PC-3 (cell line): ENCODE measurements at regions of chr4 and their contacts with region 1.

Region 1: GRCh38 chr4:147866532-147867271 is 134.8 kb downstream of the ARHGAP10 start:
- DNase-seq: peak; percentile 89
- ATAC-seq: peak; percentile 88
- H3K4me3 ChIP-seq: no peak overlapping the region
- H3K27ac ChIP-seq: no peak overlapping the region
- H3K4me1 ChIP-seq: no peaks in the 10 kb centered on the region
- H3K27me3 ChIP-seq: no peaks in the 10 kb centered on the region
- CTCF ChIP-seq: peak; percentile 99

Region 2: GRCh38 chr4:147019061-147019460 is 847.6 kb before region 1 on chr4:
- CTCF ChIA-PET with region 1: interaction called, 4 read pairs
- POLR2A ChIA-PET with region 1: no interaction called
- intact Hi-C with region 1: loop called (anchors 5 kb)
- DNase-seq: peak; percentile 72
- ATAC-seq: peak; percentile 85
- H3K4me3 ChIP-seq: no peak overlapping the region
- H3K27ac ChIP-seq: no peak overlapping the region
- H3K4me1 ChIP-seq: no peaks in the 10 kb centered on the region
- H3K27me3 ChIP-seq: peaks cover 12% of the 10 kb centered on the region
- CTCF ChIP-seq: peak; percentile 77

Region 3: DNA sequence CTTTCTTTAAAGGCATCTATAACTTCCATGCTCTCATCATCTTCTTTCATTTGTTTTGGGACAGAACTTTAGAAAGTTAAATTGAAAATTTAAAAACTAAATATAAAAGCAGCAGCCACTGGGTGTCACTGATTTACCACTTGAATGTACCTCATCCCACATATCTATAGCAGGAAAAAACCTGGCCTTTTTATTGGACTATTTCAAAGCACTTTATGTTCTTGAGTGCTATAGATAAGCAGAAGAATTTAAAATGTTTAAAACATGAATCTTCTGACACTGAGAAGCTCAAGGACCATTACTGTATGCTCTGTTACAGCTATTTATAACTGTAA is 755.7 kb before region 1 on chr4:
- CTCF ChIA-PET with region 1: no interaction called
- POLR2A ChIA-PET with region 1: no interaction called
- intact Hi-C with region 1: loop called (anchors 5 kb)
- DNase-seq: peak; percentile 43
- ATAC-seq: peak; percentile 38; the same call in 1 of the 2 replicates
- H3K4me3 ChIP-seq: no peak overlapping the region
- H3K27ac ChIP-seq: no peak overlapping the region
- H3K4me1 ChIP-seq: no peaks in the 10 kb centered on the region
- H3K27me3 ChIP-seq: no peaks in the 10 kb centered on the region
- CTCF ChIP-seq: peak; percentile 59

Region 4: DNA sequence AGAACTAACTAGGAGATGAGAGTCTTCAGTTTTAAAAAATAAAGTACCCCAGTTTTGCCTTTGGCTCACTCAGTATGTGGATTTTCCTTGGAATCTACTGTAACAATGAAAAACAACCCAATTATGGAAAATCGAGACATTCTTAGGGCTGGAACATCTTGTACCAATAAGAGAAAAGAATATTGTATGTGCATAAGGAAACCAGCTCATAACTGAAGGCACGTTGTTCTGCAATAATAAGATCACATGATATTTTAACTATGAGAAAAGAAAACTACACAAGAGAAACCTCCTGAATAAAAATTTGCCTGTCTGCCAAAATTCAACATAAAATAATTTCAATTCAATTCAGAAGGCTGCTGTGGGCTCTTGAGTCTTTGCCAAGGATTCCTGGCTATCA is 647.6 kb before region 1 on chr4:
- CTCF ChIA-PET with region 1: no interaction called
- POLR2A ChIA-PET with region 1: no interaction called
- intact Hi-C with region 1: no loop called
- DNase-seq: no peak
- ATAC-seq: no peak
- H3K4me3 ChIP-seq: no peak overlapping the region
- H3K27ac ChIP-seq: no peak overlapping the region
- H3K4me1 ChIP-seq: peaks cover 7% of the 10 kb centered on the region; the same call in 1 of the 2 replicates
- H3K27me3 ChIP-seq: no peaks in the 10 kb centered on the region
- CTCF ChIP-seq: no peak

Region 5: DNA sequence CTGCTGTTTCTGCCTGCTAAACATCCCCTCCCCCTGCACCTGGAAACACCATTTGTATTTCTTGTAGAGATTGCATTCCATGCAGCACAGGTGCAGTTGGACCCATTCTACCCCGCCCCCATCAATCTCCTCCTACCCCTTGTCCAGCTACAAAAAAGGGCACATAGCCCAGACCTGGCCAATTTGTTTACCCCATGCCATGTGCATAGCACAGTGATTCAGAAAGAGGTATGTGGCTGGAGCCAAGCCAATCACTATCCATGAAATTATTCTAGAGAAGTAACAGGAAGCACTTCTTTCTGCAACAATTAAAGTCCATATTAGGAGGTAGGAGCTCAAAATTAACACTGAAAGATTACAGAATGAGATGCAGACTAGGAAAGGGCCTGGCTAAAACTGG is 269.7 kb before region 1 on chr4:
- CTCF ChIA-PET with region 1: interaction called, 9 read pairs
- POLR2A ChIA-PET with region 1: no interaction called
- intact Hi-C with region 1: loop called (anchors 1 kb)
- DNase-seq: peak; percentile 90
- ATAC-seq: peak; percentile 88
- H3K4me3 ChIP-seq: no peak overlapping the region
- H3K27ac ChIP-seq: no peak overlapping the region
- H3K4me1 ChIP-seq: peaks cover 15% of the 10 kb centered on the region
- H3K27me3 ChIP-seq: no peaks in the 10 kb centered on the region
- CTCF ChIP-seq: no peak

Region 6: GRCh38 chr4:147693218-147693617 is 173.5 kb before region 1 on chr4:
- CTCF ChIA-PET with region 1: no interaction called
- POLR2A ChIA-PET with region 1: no interaction called
- intact Hi-C with region 1: loop called (anchors 5 kb)
- DNase-seq: no peak
- ATAC-seq: no peak
- H3K4me3 ChIP-seq: no peak overlapping the region
- H3K27ac ChIP-seq: no peak overlapping the region
- H3K4me1 ChIP-seq: no peaks in the 10 kb centered on the region
- H3K27me3 ChIP-seq: no peaks in the 10 kb centered on the region
- CTCF ChIP-seq: no peak

Region 7: GRCh38 chr4:147707865-147708672 is 158.6 kb before region 1 on chr4:
- CTCF ChIA-PET with region 1: interaction called, 6 read pairs
- POLR2A ChIA-PET with region 1: no interaction called
- intact Hi-C with region 1: loop called (anchors 1 kb)
- DNase-seq: peak; percentile 64
- ATAC-seq: peak; percentile 66
- H3K4me3 ChIP-seq: no peak overlapping the region
- H3K27ac ChIP-seq: no peak overlapping the region
- H3K4me1 ChIP-seq: no peaks in the 10 kb centered on the region
- H3K27me3 ChIP-seq: no peaks in the 10 kb centered on the region
- CTCF ChIP-seq: peak; percentile 87

Region 8: GRCh38 chr4:147772459-147772969 is 94.2 kb before region 1 on chr4:
- CTCF ChIA-PET with region 1: no interaction called
- POLR2A ChIA-PET with region 1: no interaction called
- intact Hi-C with region 1: loop called (anchors 5 kb)
- DNase-seq: peak; percentile 54
- ATAC-seq: peak; percentile 48
- H3K4me3 ChIP-seq: no peak overlapping the region
- H3K27ac ChIP-seq: peak overlapping the region; percentile 62
- H3K4me1 ChIP-seq: peaks cover 47% of the 10 kb centered on the region
- H3K27me3 ChIP-seq: no peaks in the 10 kb centered on the region
- CTCF ChIP-seq: no peak

Region 9: GRCh38 chr4:147899512-147899911 is 32.8 kb after region 1 on chr4:
- CTCF ChIA-PET with region 1: no interaction called
- POLR2A ChIA-PET with region 1: no interaction called
- intact Hi-C with region 1: no loop called
- DNase-seq: no peak
- ATAC-seq: no peak
- H3K4me3 ChIP-seq: no peak overlapping the region
- H3K27ac ChIP-seq: no peak overlapping the region
- H3K4me1 ChIP-seq: no peaks in the 10 kb centered on the region
- H3K27me3 ChIP-seq: no peaks in the 10 kb centered on the region
- CTCF ChIP-seq: no peak